Esophagus muscularis mucosa (tissue), 4 donors: ENCODE measurements at regions of chr22 and their contacts with region 1.

Region 1: DNA sequence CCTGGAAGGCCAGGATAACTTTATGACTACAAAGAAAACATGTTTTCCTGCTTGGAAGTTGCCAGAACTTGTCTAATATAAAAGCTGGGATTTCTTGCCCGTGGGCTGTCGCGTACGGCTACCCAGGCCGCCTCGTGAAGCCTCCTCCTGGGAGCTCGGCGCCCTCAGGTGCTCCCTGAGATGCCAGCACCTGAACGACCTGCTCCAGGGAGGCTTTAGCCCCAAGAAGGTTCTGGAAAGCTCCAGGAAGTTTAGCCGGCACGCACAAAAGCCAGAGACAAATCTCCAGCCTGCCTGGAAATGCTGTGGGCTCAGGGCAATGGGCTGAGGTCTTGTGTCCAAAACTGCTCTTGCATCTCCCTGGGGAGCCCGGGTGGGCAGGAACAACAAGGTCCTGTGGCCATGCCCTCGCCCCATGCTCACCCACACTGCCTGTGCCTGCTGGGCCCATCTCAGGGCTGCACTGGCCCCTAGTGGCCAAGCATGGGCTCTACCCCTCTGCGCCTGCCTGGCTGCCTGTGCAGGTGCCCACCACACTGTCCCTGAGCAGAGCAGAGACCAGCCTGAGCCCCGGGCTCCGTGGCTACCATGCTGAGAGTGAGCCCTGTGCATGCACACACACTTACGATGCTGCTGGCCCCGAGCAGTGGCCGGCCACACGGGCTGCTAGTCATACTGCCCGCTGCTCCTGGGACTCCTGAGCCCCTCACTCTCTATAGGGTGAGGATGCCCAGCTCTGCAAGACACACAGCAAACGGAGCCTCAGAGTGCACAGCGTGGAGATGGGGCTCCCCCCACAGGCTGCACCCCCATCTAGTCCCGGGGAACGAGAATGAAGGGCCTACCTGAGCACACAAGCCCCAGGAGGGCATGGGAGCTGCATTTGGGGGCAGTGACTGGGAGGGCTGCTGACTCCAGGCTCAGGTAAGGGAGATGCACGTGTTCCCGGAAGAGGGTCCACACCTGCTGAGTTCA is 4.9 kb upstream of the CELSR1 start:
- DNase-seq: no peak
- H3K4me3 ChIP-seq: no peak overlapping the region
- H3K27ac ChIP-seq: no peak overlapping the region
- H3K4me1 ChIP-seq: peaks cover 34 to 55% (median 50%) of the 10 kb centered on the region in 4 donors
- H3K27me3 ChIP-seq: peaks cover 0 to 21% (median 13%) of the 10 kb centered on the region in 4 donors
- CTCF ChIP-seq: peak; percentile 88 to 98 (median 90)
- EP300 ChIP-seq: no peak
- POLR2A ChIP-seq: no peak

Region 2: DNA sequence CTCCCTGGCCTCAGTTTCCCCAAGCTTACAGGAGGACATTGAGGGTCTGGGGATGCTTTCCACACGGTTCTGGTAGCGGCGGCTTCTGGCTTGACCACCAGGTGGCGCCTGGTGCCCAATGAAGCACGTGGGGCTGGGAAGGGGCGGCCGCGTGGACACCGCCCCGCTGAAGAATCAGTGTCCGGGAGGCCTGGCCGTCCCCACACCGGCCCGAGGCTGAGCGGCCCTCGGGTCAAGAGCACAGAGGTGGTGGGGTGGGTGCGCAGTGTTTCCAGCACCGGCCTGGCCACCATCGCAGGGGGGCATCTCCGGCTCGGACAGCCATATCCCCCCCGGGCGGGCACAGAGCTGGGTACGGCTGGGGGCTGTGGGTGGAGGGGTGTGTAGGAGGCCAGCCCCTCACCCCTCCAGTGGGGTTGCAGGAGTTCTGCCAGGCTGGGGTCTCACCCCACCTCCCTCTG is 419.8 kb before region 1 on chr22:
- intact Hi-C with region 1: loop called (anchors 10 kb)
- DNase-seq: no peak
- H3K4me3 ChIP-seq: peak overlapping the region in 3 of 4 donors; percentile 10 to 40 (median 17)
- H3K27ac ChIP-seq: no peak overlapping the region
- H3K4me1 ChIP-seq: peaks cover 6 to 27% (median 25%) of the 10 kb centered on the region in 4 donors
- H3K27me3 ChIP-seq: no peaks in the 10 kb centered on the region
- CTCF ChIP-seq: peak; percentile 92 to 93 (median 93)
- EP300 ChIP-seq: no peak
- POLR2A ChIP-seq: no peak

Region 3: DNA sequence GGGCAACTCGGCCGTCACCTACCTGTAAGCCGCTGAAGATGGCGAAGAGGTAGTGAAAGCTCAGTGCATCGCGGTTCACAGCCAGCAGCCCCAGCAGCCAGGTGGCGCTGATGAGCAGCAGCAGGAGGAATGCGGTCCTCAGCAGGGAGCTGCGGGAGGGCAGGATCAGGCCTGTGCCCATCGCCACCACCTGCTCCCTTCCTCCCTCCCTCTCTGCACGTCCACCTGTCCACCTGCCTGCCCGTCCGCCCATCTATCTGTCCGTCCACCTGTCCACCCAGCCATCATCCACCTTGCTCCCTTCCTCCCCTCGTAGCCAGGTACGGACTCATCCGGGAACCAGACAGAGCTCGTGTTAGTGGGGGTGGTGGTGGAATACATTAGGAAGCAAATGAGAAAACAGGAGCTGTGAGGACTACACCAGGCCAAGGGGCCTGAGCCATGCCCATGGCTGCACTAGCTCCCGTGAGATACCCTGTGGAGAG is 174.5 kb before region 1 on chr22:
- intact Hi-C with region 1: loop called (anchors 1 kb)
- DNase-seq: no peak
- H3K4me3 ChIP-seq: no peak overlapping the region
- H3K27ac ChIP-seq: no peak overlapping the region
- H3K4me1 ChIP-seq: peaks cover 0 to 7% (median 2%) of the 10 kb centered on the region in 4 donors
- H3K27me3 ChIP-seq: peaks cover 0 to 35% (median 0%) of the 10 kb centered on the region in 4 donors
- CTCF ChIP-seq: peak; percentile 71 to 88 (median 82)
- EP300 ChIP-seq: no peak
- POLR2A ChIP-seq: no peak